ENCODE measurements at regions of chr1 and their contacts with region 1.

Region 1: DNA sequence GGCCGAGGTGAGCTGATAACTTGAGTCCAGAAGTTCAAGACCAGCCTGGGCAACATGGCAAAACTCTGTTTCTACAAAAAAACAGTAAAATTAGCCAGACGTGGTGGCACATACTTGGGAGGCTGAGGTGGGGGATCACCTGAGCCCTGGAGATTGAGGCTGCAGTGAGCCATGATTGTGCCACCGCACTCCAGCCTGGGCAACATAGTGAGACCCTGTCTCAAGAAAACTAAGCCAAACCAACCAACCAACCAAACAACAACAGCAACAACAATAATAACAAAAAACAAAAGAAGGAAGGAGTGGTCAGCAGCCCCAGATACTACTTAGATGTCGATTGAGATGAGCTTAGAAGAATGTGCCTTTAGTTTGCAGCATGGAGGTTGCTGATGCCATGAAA is 47.7 kb downstream of the CENPF start:
- DNase-seq: no peak
- ATAC-seq: no peak
- H3K4me3 Mint-ChIP-seq: no peak overlapping the region
- H3K27ac Mint-ChIP-seq: no peak overlapping the region
- H3K4me1 Mint-ChIP-seq: no peaks in the 10 kb centered on the region
- H3K27me3 Mint-ChIP-seq: no peaks in the 10 kb centered on the region
- CTCF ChIP-seq: no peak

Region 2: DNA sequence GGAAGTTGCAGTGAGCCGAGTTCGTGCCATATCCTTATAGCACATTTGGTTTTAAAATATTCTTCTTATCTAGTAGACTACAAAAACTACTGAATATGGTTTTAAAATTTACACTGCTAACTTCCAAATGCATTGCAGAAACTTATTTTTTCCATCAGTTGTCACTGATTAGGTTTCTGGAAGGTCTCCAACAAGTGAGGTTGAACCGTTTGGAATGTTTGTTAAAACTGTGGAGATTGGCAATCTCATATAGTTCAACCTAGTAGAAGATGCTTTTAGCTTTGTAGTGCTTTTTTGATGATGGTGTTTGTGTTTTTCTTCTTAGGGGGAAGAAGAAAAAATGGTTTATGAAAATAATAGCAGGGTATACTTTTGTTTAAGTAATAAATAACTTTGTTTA is 34.8 kb before region 1 on chr1:
- CTCF ChIA-PET with region 1: no interaction called
- POLR2A ChIA-PET with region 1: no interaction called
- intact Hi-C with region 1: no loop called
- DNase-seq: no peak
- ATAC-seq: no peak
- H3K4me3 Mint-ChIP-seq: no peak overlapping the region
- H3K27ac Mint-ChIP-seq: no peak overlapping the region
- H3K4me1 Mint-ChIP-seq: peaks cover 4% of the 10 kb centered on the region
- H3K27me3 Mint-ChIP-seq: no peaks in the 10 kb centered on the region
- CTCF ChIP-seq: no peak

Region 3: DNA sequence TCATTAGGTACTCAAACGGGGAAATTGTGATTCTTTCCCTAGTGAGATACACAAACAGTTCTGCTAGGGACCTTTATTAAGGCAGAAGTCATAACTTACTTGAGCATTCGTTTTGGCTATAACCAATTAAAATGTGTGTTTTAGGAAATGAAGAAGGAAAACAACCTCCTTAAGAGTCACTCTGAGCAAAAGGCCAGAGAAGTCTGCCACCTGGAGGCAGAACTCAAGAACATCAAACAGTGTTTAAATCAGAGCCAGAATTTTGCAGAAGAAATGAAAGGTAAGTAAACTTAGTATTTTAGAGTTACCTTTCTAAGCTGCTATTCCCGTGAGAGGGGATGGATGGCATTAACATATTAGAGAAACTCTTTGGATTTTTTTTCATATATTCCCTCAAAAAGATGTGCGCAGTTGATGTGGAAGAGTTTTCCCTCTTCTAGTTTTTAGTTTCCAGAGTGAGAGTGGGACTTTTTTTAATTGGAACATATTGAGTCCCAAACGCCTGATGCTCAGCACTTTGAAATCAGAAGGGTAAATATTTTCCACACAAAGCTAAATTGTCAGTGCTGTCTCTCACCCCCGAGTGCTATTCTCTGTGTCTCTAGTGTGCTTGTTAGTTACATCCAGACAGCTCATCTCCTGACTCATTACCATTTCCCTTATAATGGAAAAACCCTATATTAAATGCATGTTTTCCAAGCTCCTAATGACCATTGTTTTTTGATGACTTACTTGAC is 12.8 kb before region 1 on chr1:
- CTCF ChIA-PET with region 1: interaction called, 12 read pairs
- POLR2A ChIA-PET with region 1: no interaction called
- intact Hi-C with region 1: no loop called
- DNase-seq: no peak
- ATAC-seq: no peak
- H3K4me3 Mint-ChIP-seq: no peak overlapping the region
- H3K27ac Mint-ChIP-seq: no peak overlapping the region
- H3K4me1 Mint-ChIP-seq: no peaks in the 10 kb centered on the region
- H3K27me3 Mint-ChIP-seq: no peaks in the 10 kb centered on the region
- CTCF ChIP-seq: no peak

Measured in activated B cell treated with CpG ODN at 0.5 μM for 24 hours (primary cell).